Activated CD4-positive, alpha-beta memory T cell treated with anti-CD3 and anti-CD28 coated beads for 36 hours (primary cell): ENCODE measurements at regions of chr3 and their contacts with region 1.

Region 1: GRCh38 chr3:66500576-66501482 is at the start of gene LRIG1:
- DNase-seq: peak; percentile 99
- H3K4me3 Mint-ChIP-seq: peak within 1 kb of the TSS; percentile 96
- H3K27ac Mint-ChIP-seq: peak within 1 kb of the TSS; percentile 91
- H3K4me1 Mint-ChIP-seq: peaks cover 53% of the 10 kb centered on the region
- H3K27me3 Mint-ChIP-seq: no peaks in the 10 kb centered on the region
- total RNA-seq, gene LRIG1: 35.3 to 40.4 TPM

Region 2: DNA sequence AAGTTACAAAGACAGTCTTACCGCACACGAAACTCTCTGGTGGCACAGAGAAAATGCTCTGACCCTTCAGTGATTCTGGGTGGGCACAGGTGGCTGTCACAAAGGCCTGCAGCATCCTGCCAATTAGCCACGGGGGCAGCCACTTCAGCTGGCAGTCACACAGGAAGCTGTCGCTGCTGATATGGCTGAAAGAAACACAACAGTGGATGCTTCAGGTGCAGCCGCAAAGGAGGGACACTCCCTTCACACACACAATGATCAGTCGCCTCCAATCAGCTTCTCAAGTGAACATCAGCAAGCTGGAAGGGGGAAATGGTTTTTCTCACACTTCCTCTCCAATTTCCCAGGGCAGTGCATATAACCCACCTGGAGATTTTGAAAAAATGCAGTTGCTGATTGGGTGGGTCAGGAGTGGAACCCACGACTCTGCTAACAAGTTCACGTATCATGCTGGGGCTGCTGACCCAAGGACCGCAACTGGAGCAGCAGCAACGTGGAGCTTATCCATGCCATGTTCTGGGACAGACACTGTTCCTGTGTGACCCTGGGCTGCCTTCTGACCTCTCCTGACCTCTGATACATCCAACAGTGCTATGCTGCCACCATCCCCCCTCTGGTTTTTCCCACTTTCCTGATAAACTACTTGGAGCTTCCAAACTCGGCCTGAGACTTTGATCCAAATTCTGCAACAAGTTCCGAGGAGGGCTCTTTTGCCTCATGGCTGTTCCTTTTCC is 106.6 kb before region 1 on chr3:
- CTCF ChIA-PET with region 1: no interaction called
- POLR2A ChIA-PET with region 1: no interaction called
- intact Hi-C with region 1: loop called (anchors 5 kb)
- DNase-seq: peak; percentile 74
- H3K4me3 Mint-ChIP-seq: peak overlapping the region; percentile 73
- H3K27ac Mint-ChIP-seq: peak overlapping the region; percentile 93
- H3K4me1 Mint-ChIP-seq: peaks cover 57% of the 10 kb centered on the region
- H3K27me3 Mint-ChIP-seq: no peaks in the 10 kb centered on the region

Region 3: DNA sequence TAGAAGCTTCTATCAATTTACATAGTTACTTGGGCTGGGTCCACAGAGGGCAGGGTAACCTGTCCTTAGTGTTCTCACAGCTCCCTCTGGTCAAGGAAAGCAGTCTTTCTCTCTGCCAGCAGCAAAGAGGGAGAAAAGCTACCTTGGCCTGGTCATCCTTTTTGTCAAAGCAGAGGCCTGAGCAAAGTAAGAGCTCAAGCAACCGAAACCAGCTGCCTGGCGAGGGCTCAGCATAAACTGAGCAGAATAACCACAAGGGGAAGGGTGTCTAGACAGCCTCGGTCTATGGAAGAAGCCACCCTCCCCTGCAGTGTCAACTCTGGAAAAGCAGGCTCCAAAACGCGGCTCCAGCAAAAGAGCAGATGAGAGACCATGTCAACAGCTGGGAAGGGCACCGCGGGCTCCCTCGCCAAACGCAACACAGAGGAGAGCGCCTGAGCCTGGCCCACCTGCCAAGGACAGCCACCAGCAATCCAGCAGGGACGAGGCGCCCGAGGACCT is 17.4 kb before region 1 on chr3:
- CTCF ChIA-PET with region 1: interaction called, 5 read pairs
- POLR2A ChIA-PET with region 1: interaction called, 7 read pairs
- intact Hi-C with region 1: loop called (anchors 1 kb)
- DNase-seq: no peak
- H3K4me3 Mint-ChIP-seq: peak overlapping the region; percentile 53
- H3K27ac Mint-ChIP-seq: no peak overlapping the region
- H3K4me1 Mint-ChIP-seq: peaks cover 47% of the 10 kb centered on the region
- H3K27me3 Mint-ChIP-seq: no peaks in the 10 kb centered on the region

Region 4: DNA sequence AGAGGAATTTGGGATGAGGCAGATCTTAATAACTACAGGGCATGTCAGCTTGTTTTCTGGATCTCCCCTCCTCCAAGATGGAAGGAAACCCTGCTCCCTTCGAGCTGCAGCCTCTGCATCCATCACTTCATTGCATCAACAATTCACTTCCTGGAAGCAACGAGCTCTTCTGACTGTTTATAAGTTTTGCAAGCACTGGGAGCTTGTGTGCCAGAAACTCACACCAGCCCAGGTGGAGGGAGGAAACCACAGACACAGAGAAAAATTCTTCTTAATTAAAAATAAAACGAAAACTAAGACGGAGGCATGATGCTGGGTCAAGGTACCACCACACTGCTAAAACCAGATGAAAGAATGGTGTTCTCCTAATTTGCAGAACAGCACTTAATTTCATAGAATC is 10.6 kb before region 1 on chr3:
- CTCF ChIA-PET with region 1: interaction called, 7 read pairs
- POLR2A ChIA-PET with region 1: interaction called, 10 read pairs
- intact Hi-C with region 1: loop called (anchors 1 kb)
- DNase-seq: peak; percentile 54
- H3K4me3 Mint-ChIP-seq: peak overlapping the region; percentile 60
- H3K27ac Mint-ChIP-seq: peak overlapping the region; percentile 91
- H3K4me1 Mint-ChIP-seq: peaks cover 87% of the 10 kb centered on the region
- H3K27me3 Mint-ChIP-seq: no peaks in the 10 kb centered on the region

Region 5: DNA sequence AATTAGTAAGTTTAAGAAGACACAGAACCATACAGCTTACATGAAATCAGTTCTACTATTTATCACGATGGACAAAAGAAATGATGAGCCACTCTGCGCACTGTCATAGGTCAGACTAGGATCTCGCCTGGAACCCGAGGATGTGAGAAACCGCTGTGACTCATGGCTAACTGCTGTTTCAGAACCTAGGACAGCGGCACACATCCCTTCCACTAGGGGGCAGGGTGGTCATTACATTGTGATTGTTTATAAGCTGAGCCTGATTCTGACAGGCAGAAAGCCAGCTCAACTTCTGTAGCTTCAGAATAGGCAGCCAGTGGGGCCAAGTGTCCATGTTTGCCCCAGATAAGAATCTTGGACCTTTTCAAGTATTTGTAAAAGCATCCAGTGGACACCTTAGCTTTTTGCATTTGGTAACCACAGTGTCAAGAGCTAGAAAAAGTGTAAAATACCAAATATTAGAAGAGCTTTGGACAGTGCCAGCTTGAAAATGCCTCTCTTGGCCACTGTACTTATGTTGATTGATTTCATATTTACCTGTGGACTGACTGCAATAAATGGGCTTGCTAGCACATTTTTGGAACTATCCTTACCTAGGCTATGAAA is 613.1 kb after region 1 on chr3:
- CTCF ChIA-PET with region 1: no interaction called
- POLR2A ChIA-PET with region 1: no interaction called
- intact Hi-C with region 1: no loop called
- DNase-seq: peak; percentile 91
- H3K4me3 Mint-ChIP-seq: no peak overlapping the region
- H3K27ac Mint-ChIP-seq: peak overlapping the region; percentile 13
- H3K4me1 Mint-ChIP-seq: peaks cover 6% of the 10 kb centered on the region
- H3K27me3 Mint-ChIP-seq: peaks cover 22% of the 10 kb centered on the region